Left cardiac atrium (tissue), 4 donors: ENCODE measurements at regions of chr11 and their contacts with region 1.

Region 1: GRCh38 chr11:34492806-34493414 is 20.7 kb downstream of the ELF5 start:
- DNase-seq: peak; percentile 65
- ATAC-seq: peak in 1 of 2 donors; percentile 44

Region 2: GRCh38 chr11:34174412-34175041 is 318.4 kb before region 1 on chr11:
- intact Hi-C with region 1: loop called in 1 of 2 experiments (anchors 10 kb)
- DNase-seq: peak; percentile 88
- ATAC-seq: peak; percentile 98

Region 3: DNA sequence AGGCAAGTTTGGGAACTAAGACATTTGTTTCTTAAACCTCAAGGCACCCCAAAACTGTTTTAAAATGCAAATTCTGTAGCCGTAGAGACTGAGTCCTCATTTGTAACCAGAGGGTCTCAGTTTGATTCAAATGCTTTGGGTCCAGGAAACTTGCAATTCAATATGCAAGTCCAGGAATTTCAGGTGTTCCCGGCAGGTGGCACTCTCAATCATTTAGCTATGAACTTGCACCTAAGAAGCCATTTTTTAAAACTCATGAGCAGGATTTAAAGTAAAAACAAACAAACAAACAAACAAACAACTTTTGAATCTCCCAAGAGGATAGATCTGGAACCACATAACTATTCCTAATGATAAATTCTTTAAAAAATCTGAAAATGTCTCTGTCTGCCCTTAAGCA is 126.4 kb before region 1 on chr11:
- intact Hi-C with region 1: loop called (anchors 2 to 10 kb)
- DNase-seq: no peak
- ATAC-seq: no peak

Region 4: DNA sequence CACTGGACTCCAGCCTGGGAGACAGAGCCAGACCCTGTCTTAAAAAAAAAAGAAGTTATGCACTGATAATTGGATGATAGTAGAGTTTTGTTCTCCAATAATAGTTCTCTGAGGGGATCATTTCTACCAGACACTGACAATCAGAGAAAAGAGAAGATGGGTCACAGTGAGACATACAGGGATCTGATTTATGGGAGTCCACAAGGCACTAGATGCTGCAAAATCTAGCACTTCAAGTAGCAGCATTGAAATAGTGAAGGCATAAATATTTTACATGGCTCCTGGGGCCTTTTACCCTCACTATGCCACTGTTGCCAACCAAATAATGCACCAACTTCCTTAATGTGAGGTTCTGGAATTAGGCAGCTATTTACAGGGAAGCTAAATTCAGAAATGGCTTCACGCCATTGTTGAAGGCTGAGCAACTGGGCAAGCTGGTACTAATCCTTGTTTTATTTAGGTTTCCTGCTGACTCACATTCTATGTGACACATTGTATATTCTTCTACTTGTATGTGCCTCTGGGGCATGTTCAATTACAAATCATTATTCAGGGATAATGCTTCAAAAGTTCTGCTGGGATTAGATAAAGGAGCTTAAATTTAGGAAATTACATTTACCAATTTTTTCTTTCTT is 96.9 kb before region 1 on chr11:
- intact Hi-C with region 1: no loop called
- DNase-seq: no peak
- ATAC-seq: no peak

Region 5: GRCh38 chr11:34480314-34480713 is 12.6 kb before region 1 on chr11:
- intact Hi-C with region 1: no loop called
- DNase-seq: no peak
- ATAC-seq: no peak

Region 6: GRCh38 chr11:34525887-34526636 is 33.2 kb after region 1 on chr11:
- intact Hi-C with region 1: no loop called
- DNase-seq: no peak
- ATAC-seq: no peak

Region 7: DNA sequence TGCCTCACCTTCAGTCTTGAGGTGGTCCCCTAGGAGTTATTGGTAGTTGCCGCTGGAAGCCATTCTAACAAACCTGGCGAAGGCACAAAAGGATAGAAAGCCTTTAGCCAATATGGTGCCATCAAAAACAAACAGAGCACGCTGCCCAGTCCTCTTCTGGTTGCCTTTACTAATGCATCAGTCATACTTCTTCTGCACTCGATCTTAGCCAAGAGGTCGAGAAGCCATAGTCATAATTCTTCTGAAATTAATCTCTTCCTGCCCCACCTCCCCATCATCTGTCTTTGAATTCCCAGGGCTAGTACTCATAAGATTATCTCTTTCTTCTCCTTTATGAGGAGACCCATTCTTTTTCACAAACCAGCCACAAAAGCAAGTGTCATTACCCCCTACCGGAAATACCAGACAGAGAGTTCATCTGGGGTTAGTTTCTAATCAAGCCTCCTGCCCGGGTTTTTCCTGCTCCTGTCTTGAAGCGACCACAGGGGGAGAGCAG is 106.5 kb after region 1 on chr11:
- intact Hi-C with region 1: no loop called
- DNase-seq: no peak
- ATAC-seq: peak in 1 of 2 donors; percentile 25